ENCODE measurements at regions of chr7 and their contacts with region 1.

Region 1: GRCh38 chr7:77812290-77812685 is 13.7 kb downstream of the PHTF2 start:
- DNase-seq: peak in 1 of 2 experiments; percentile 73
- H3K4me3 ChIP-seq: peak overlapping the region; percentile 7; the same call in 1 of the 2 replicates
- H3K27ac ChIP-seq: peak overlapping the region; percentile 76
- H3K4me1 ChIP-seq: peaks cover 21% of the 10 kb centered on the region
- H3K27me3 ChIP-seq: no peaks in the 10 kb centered on the region
- CTCF ChIP-seq: no peak

Region 2: DNA sequence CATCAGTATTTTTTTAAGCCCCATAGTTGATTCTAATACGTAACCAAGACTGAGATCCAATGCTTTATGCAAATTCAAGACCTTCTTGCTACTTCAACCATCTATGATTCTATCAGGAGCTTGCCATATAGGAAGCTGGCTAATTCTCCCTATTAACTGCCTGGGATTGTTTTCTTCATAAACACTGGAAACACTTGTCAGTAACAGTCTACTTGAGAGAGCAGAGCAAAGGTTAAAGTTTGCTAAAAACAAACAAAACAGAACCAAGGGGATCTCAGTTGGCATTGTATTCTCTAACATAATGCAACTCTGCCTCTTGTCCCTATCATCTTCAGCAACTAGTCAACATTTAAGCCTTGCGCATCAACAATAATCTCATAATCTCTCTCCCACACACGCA is 296.2 kb before region 1 on chr7:
- CTCF ChIA-PET with region 1: no interaction called
- POLR2A ChIA-PET with region 1: no interaction called
- intact Hi-C with region 1: no loop called
- DNase-seq: no peak
- H3K4me3 ChIP-seq: no peak overlapping the region
- H3K27ac ChIP-seq: no peak overlapping the region
- H3K4me1 ChIP-seq: no peaks in the 10 kb centered on the region; the same call in 1 of the 2 replicates
- H3K27me3 ChIP-seq: no peaks in the 10 kb centered on the region
- CTCF ChIP-seq: no peak

Region 3: GRCh38 chr7:77830649-77831355 is 18.5 kb after region 1 on chr7:
- CTCF ChIA-PET with region 1: interaction called, 3 read pairs
- POLR2A ChIA-PET with region 1: interaction called, 6 read pairs
- intact Hi-C with region 1: loop called (anchors 1 kb)
- DNase-seq: no peak
- H3K4me3 ChIP-seq: no peak overlapping the region
- H3K27ac ChIP-seq: no peak overlapping the region
- H3K4me1 ChIP-seq: peaks cover 23% of the 10 kb centered on the region
- H3K27me3 ChIP-seq: no peaks in the 10 kb centered on the region
- CTCF ChIP-seq: no peak

Measured in PC-9 (cell line).